Dendritic cell treated with granulocyte-macrophage colony-stimulating factor and Interleukin-4, amounts not matched to agents 40 ng/mL and 50 ng/mL, for 4 days (primary cell): ENCODE measurements at regions of chr5 and their contacts with region 1.

Region 1: GRCh38 chr5:112995764-112996618 is 19.4 kb downstream of the DCP2 start:
- H3K4me3 Mint-ChIP-seq: no peak overlapping the region
- H3K27ac Mint-ChIP-seq: no peak overlapping the region
- H3K4me1 Mint-ChIP-seq: no peaks in the 10 kb centered on the region
- H3K27me3 Mint-ChIP-seq: no peaks in the 10 kb centered on the region

Region 2: GRCh38 chr5:112860929-112861637 is 134.9 kb before region 1 on chr5 and contains the start of gene SRP19:
- intact Hi-C with region 1: no loop called
- H3K4me3 Mint-ChIP-seq: peak within 1 kb of the TSS; percentile 88
- H3K27ac Mint-ChIP-seq: peak within 1 kb of the TSS; percentile 89
- H3K4me1 Mint-ChIP-seq: peaks cover 22% of the 10 kb centered on the region
- H3K27me3 Mint-ChIP-seq: peaks cover 14% of the 10 kb centered on the region

Region 3: GRCh38 chr5:113581388-113581787 is 585.4 kb after region 1 on chr5:
- intact Hi-C with region 1: loop called (anchors 5 kb)
- H3K4me3 Mint-ChIP-seq: no peak overlapping the region
- H3K27ac Mint-ChIP-seq: no peak overlapping the region
- H3K4me1 Mint-ChIP-seq: no peaks in the 10 kb centered on the region
- H3K27me3 Mint-ChIP-seq: no peaks in the 10 kb centered on the region